MCF 10A (cell line): ENCODE measurements at regions of chr16 and their contacts with region 1.

Region 1: GRCh38 chr16:4271176-4272066 is 1.4 kb downstream of the TFAP4 start:
- DNase-seq: peak; percentile 92
- H3K4me3 Mint-ChIP-seq: peak overlapping the region; percentile 84
- H3K27ac Mint-ChIP-seq: peak overlapping the region; percentile 67
- H3K4me1 Mint-ChIP-seq: peaks cover 5% of the 10 kb centered on the region
- H3K27me3 Mint-ChIP-seq: no peaks in the 10 kb centered on the region
- CTCF ChIP-seq: no peak

Region 2: DNA sequence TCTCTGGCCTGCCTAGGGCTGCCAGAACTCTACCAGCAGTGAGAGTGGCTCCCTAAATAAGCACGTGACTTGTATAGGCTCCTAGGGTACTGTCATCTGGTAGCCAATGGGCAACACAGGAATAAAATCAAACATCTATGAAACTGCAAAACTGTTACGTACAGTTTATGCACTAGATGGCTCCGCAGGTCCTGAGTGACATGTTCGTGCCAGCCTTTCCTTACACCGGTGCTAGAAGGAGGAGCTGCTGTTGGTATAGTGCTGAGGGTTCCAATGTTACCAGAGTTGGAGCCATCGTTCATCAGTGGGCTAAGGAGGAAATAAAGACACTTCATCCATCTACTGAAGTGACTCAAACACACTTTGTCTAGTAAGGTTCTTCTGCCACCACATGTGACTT is 490.9 kb before region 1 on chr16:
- CTCF ChIA-PET with region 1: no interaction called
- POLR2A ChIA-PET with region 1: no interaction called
- intact Hi-C with region 1: no loop called
- DNase-seq: peak; percentile 11
- H3K4me3 Mint-ChIP-seq: no peak overlapping the region
- H3K27ac Mint-ChIP-seq: no peak overlapping the region
- H3K4me1 Mint-ChIP-seq: peaks cover 6% of the 10 kb centered on the region
- H3K27me3 Mint-ChIP-seq: no peaks in the 10 kb centered on the region
- CTCF ChIP-seq: peak; percentile 14

Region 3: GRCh38 chr16:4298761-4299522 is 27.5 kb after region 1 on chr16:
- CTCF ChIA-PET with region 1: interaction called, 4 read pairs
- POLR2A ChIA-PET with region 1: interaction called, 16 read pairs
- intact Hi-C with region 1: no loop called
- DNase-seq: peak; percentile 89
- H3K4me3 Mint-ChIP-seq: peak overlapping the region; percentile 44
- H3K27ac Mint-ChIP-seq: peak overlapping the region; percentile 96
- H3K4me1 Mint-ChIP-seq: peaks cover 14% of the 10 kb centered on the region
- H3K27me3 Mint-ChIP-seq: no peaks in the 10 kb centered on the region
- CTCF ChIP-seq: no peak

Region 4: GRCh38 chr16:4307215-4308037 is 36.0 kb after region 1 on chr16:
- CTCF ChIA-PET with region 1: interaction called, 4 read pairs
- POLR2A ChIA-PET with region 1: interaction called, 32 read pairs
- intact Hi-C with region 1: loop called (anchors 2 kb)
- DNase-seq: peak; percentile 95
- H3K4me3 Mint-ChIP-seq: peak overlapping the region; percentile 84
- H3K27ac Mint-ChIP-seq: peak overlapping the region; percentile 92
- H3K4me1 Mint-ChIP-seq: peaks cover 8% of the 10 kb centered on the region
- H3K27me3 Mint-ChIP-seq: no peaks in the 10 kb centered on the region
- CTCF ChIP-seq: no peak